ENCODE measurements at regions of chr14 and their contacts with region 1.

Region 1: DNA sequence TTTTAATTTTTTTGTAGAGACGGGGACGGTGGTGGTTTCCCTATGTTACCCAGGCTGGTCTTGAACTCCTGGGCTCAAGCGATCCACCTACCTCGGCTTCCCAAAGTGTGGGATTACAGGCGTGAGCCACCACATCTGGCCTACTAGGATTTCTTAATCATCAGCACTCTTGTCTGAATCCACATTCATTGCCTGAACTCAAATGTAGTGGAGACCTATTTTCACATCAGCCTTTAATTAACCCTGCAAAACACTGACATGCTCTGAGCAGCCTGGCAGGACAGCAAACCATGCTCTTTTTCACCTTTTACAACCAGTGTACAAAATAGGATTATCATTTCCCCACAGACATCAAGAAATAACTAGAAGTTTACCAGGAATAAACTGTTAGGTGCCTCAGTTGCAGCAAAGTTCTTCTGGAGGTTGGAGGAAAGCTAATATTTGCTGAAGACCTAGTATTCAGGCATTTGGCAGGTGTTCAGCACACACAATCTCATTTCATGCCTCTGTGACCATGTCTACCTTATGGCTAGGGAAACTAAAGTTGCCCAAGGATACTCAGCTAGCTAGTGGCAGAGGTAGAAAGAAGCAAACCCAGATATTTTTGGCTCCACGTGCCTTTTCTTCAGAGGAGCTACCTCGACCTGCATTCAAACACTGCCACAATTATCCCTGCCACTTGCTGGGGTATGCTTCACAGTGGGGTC is 37.7 kb downstream of the CFL2 start:
- DNase-seq: no peak
- H3K4me3 Mint-ChIP-seq: no peak overlapping the region
- H3K27ac Mint-ChIP-seq: no peak overlapping the region
- H3K4me1 Mint-ChIP-seq: peaks cover 3% of the 10 kb centered on the region
- H3K27me3 Mint-ChIP-seq: no peaks in the 10 kb centered on the region

Region 2: GRCh38 chr14:34693228-34693939 is 16.7 kb after region 1 on chr14:
- intact Hi-C with region 1: loop called (anchors 1 kb)
- DNase-seq: no peak
- H3K4me3 Mint-ChIP-seq: peak overlapping the region; percentile 56
- H3K27ac Mint-ChIP-seq: no peak overlapping the region
- H3K4me1 Mint-ChIP-seq: peaks cover 9% of the 10 kb centered on the region
- H3K27me3 Mint-ChIP-seq: peaks cover 8% of the 10 kb centered on the region

Region 3: DNA sequence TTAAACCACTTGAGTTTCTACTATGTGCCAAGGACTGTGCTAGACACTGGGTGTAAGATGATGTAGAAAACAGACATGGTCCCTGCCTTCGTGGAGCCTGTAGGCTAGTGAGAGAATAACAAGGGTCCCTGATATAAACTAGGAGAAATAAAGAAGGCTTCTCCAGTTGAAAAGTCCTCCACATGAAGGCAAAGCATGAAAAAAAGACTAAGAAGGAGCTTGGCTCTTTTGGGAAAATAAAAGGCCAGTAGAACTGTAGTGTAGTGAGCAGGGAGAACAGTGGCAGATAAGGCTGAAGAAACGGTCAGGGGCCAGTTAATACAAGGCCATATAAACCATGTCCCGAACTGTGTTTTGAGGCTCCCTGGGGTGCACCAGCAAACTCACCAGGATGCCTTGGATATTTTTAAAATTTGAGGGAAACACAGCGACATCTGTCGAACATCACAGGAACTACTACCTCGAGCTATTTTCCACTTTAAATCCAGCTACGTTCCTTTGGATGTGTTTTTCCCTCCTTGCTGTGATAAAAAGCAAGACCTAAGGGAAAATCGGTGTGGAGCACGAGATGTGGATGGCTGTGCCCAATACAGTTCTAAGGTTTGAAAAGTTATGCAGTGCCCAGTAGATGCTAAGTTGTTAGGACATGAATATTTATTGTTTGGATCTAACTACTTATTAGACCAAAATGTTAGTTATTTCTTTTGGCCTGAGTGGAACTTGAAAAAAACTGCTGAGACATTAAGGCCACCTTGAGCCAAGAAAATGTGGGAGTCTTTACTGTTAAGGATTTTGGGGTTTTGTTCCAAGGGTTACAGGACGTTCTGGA is 46.3 kb after region 1 on chr14:
- intact Hi-C with region 1: loop called (anchors 1 kb)
- DNase-seq: peak; percentile 13
- H3K4me3 Mint-ChIP-seq: no peak overlapping the region
- H3K27ac Mint-ChIP-seq: no peak overlapping the region
- H3K4me1 Mint-ChIP-seq: peaks cover 9% of the 10 kb centered on the region
- H3K27me3 Mint-ChIP-seq: peaks cover 27% of the 10 kb centered on the region

Measured in activated T-helper 2 cell treated with anti-CD3 and anti-CD28 coated beads, Interferon-gamma antibody, Interleukin-2, Interleukin-4, amounts not matched to agents 10 μg/mL and 5 μg/mL and 100 μg/mL, durations not matched to agents 14 hours and 24 hours and 36 hours (primary cell).